H1 (cell line): ENCODE measurements at regions of chr19 and their contacts with region 1.

Region 1: GRCh38 chr19:872266-872951 is 12.9 kb downstream of the CFD start:
- DNase-seq: no peak
- H3K4me3 ChIP-seq: peak overlapping the region in 1 of 4 experiments; percentile 35; a peak in 1 of 8 replicates
- H3K27ac ChIP-seq: no peak overlapping the region
- H3K4me1 ChIP-seq: peaks cover 3 to 20% (median 6%) of the 10 kb centered on the region in 4 experiments; a peak in 6 of 7 replicates
- H3K27me3 ChIP-seq: no peaks in the 10 kb centered on the region
- CTCF ChIP-seq: no peak
- EP300 ChIP-seq: no peak
- POLR2A ChIP-seq: no peak
- RAD21 ChIP-seq: no peak

Region 2: DNA sequence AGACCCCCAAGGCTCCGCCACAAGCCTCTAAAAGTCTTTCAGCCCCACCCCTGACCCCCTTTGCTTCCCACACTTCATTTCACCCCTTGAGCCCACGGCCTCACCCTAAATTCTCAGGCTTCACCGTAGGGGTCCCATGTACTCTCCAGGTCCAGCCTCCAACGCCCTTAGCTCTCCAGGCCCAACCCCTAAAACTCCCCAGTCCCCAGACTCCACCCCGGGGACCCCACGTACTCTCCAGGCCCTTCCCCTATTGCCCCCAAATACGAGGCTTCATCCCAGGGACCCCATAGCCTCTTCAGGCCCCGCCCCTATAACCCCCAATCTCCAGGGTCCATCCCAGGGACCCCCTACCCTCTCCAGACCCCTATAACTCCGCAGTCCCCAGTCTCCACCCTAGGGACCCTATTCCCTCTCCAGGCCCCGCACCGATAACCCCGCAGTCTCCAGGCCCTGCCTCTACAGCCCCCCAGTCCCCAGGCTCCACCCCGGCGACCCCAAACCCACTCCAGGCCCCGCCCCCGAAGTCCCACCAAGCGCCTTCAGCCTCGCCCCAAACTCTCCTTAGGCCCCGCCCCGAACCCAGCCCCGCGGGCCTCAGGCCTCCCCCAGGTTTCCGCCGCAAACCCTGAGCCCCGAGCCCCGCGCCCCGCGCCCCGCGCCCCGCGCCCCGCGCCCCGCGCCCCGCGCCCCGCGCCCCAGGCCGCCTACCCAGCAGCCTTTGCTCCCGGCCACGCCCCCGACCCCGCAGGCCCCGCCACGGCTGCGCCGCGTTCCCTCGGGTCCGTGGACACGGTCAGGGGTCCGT is 20.0 kb after region 1 on chr19:
- CTCF ChIA-PET with region 1: interaction called, 5 read pairs
- POLR2A ChIA-PET with region 1: interaction called, 82 read pairs
- DNase-seq: no peak
- H3K4me3 ChIP-seq: peak overlapping the region; percentile 75 to 91 (median 78)
- H3K27ac ChIP-seq: peak overlapping the region; percentile 89
- H3K4me1 ChIP-seq: peaks cover 0 to 5% (median under 1%) of the 10 kb centered on the region in 4 experiments; a peak in 3 of 7 replicates
- H3K27me3 ChIP-seq: no peaks in the 10 kb centered on the region
- CTCF ChIP-seq: no peak
- EP300 ChIP-seq: no peak
- POLR2A ChIP-seq: no peak
- RAD21 ChIP-seq: no peak